Caco-2 (cell line): ENCODE measurements at regions of chr13 and their contacts with region 1.

Region 1: DNA sequence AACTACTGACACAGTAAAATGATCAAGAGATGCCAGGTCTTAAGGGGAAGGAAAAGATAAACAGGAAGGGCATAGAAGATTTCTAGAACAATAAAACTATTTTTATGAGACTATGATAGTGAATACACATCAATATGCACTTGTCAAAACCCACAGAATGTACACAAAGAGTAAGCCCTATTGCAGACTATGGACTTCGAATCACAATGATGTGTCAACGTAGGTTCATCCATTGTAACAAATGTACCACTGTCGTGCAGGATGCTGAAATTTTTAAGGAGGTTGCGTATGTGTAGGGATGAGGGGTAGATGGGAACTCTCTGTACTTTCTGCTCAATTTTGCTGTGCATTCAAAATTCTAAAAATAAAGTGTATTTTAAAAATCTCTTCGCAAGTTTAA is 171.9 kb downstream of the KLF12 start:
- DNase-seq: peak in 1 of 2 experiments; percentile 25
- H3K4me3 ChIP-seq: no peak overlapping the region
- H3K4me3 Mint-ChIP-seq: no peak overlapping the region
- H3K27ac Mint-ChIP-seq: no peak overlapping the region
- H3K4me1 ChIP-seq: no peaks in the 10 kb centered on the region
- H3K4me1 Mint-ChIP-seq: peaks cover 11% of the 10 kb centered on the region
- H3K27me3 ChIP-seq: no peaks in the 10 kb centered on the region
- H3K27me3 Mint-ChIP-seq: no peaks in the 10 kb centered on the region
- CTCF ChIP-seq: no peak

Region 2: GRCh38 chr13:73767747-73768315 is 194.5 kb before region 1 on chr13:
- CTCF ChIA-PET with region 1: no interaction called
- POLR2A ChIA-PET with region 1: no interaction called
- intact Hi-C with region 1: no loop called
- DNase-seq: peak in 1 of 2 experiments; percentile 17
- H3K4me3 ChIP-seq: no peak overlapping the region
- H3K4me3 Mint-ChIP-seq: no peak overlapping the region
- H3K27ac Mint-ChIP-seq: no peak overlapping the region
- H3K4me1 ChIP-seq: peaks cover 14% of the 10 kb centered on the region; the same call in 1 of the 2 replicates
- H3K4me1 Mint-ChIP-seq: peaks cover 27% of the 10 kb centered on the region
- H3K27me3 ChIP-seq: no peaks in the 10 kb centered on the region
- H3K27me3 Mint-ChIP-seq: no peaks in the 10 kb centered on the region
- CTCF ChIP-seq: peak; percentile 45 to 53

Region 3: GRCh38 chr13:73981595-73981994 is 19.3 kb after region 1 on chr13:
- CTCF ChIA-PET with region 1: no interaction called
- POLR2A ChIA-PET with region 1: no interaction called
- intact Hi-C with region 1: loop called (anchors 1 kb)
- DNase-seq: no peak
- H3K4me3 ChIP-seq: no peak overlapping the region
- H3K4me3 Mint-ChIP-seq: no peak overlapping the region
- H3K27ac Mint-ChIP-seq: no peak overlapping the region
- H3K4me1 ChIP-seq: no peaks in the 10 kb centered on the region
- H3K4me1 Mint-ChIP-seq: no peaks in the 10 kb centered on the region
- H3K27me3 ChIP-seq: no peaks in the 10 kb centered on the region
- H3K27me3 Mint-ChIP-seq: no peaks in the 10 kb centered on the region
- CTCF ChIP-seq: no peak

Region 4: DNA sequence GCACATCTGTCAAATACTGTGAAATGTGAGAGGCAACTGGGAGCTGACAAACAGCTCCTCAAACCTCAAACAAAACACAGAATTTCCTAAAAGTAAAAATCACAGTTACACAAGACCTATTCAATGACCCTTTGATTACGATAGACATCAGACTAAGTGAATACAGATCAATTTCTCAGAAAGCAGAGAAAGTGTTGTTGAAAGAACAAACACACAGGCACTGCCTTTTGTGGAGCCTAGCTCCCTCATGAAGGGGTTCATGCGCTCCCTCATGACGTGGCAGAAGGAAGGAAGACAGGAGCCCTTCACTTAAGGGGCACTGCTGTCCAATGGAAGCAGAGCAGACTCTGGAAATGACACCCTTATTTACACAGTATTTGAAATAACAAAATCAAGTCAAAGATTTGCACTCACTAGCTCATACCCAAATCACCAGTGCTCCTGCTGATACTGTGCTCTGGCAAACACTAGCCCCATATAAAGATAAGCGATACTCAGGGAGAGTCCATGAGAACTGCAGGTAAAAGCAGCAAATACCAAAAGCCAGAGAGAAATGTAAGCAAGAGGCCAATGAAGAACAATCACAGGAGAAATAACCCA is 27.1 kb after region 1 on chr13:
- CTCF ChIA-PET with region 1: no interaction called
- POLR2A ChIA-PET with region 1: no interaction called
- intact Hi-C with region 1: loop called (anchors 1 kb)
- DNase-seq: peak in 1 of 2 experiments; percentile 17
- H3K4me3 ChIP-seq: no peak overlapping the region
- H3K4me3 Mint-ChIP-seq: peak overlapping the region; percentile 22
- H3K27ac Mint-ChIP-seq: peak overlapping the region; percentile 75
- H3K4me1 ChIP-seq: peaks cover 13% of the 10 kb centered on the region
- H3K4me1 Mint-ChIP-seq: peaks cover 26% of the 10 kb centered on the region
- H3K27me3 ChIP-seq: no peaks in the 10 kb centered on the region
- H3K27me3 Mint-ChIP-seq: no peaks in the 10 kb centered on the region
- CTCF ChIP-seq: no peak